WTC11 (cell line): ENCODE measurements at regions of chr19 and their contacts with region 1.

Region 1: GRCh38 chr19:28633319-28634018 is 579.5 kb downstream of the UQCRFS1 start:
- DNase-seq: peak; percentile 73
- ATAC-seq: peak; percentile 90
- H3K4me3 Mint-ChIP-seq: no peak overlapping the region
- H3K27ac Mint-ChIP-seq: peak overlapping the region; percentile 8; the same call in 1 of the 2 replicates
- H3K4me1 Mint-ChIP-seq: peaks cover 8% of the 10 kb centered on the region
- H3K27me3 Mint-ChIP-seq: no peaks in the 10 kb centered on the region
- CTCF ChIP-seq: peak; percentile 97

Region 2: DNA sequence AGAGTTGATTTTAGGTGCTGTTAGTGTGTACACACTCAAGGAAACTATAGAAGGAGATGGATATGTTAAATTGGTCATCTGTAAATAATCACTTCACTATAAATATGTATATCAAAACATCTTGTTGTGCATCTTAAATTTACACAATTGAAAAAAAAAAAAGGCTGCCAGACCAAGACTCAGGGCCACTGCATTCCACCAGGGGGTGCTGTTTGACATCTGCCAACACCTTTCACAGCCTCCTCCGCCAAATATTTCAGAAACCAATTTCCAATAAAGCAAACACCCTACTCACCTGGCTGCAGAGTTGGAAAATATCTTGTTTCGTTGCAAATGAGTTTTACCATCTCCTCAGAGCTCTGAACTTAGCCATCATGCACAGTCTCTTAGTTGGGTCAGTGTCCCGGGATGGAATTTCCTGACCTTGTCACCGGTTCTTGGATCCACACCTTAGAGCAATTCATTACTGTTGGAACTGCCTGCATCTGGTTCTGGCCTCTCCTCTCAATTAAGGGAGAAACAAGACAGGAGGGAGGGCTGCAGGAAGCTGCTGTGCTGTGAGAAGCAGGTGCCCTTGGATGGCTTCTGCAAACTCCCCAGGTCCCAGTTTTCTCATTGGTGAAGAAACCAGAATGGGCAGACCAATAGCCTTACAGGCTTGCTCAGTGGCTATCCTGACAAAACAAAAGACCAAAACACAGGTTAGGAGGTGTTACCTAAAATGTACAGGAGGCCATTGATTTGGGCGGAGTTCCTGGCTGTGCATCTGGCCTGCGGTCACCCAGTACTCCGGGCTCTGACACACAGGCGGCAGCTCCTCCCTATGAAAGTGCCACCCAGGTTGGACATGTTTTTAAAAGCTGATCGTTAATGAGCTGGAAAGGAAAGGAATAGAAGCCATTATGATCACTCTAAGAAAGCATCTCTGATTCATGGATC is 167.1 kb before region 1 on chr19:
- CTCF ChIA-PET with region 1: interaction called, 55 read pairs
- POLR2A ChIA-PET with region 1: no interaction called
- DNase-seq: peak; percentile 79
- ATAC-seq: peak; percentile 28
- H3K4me3 Mint-ChIP-seq: no peak overlapping the region
- H3K27ac Mint-ChIP-seq: no peak overlapping the region
- H3K4me1 Mint-ChIP-seq: peaks cover 32% of the 10 kb centered on the region
- H3K27me3 Mint-ChIP-seq: no peaks in the 10 kb centered on the region
- CTCF ChIP-seq: peak; percentile 83

Region 3: DNA sequence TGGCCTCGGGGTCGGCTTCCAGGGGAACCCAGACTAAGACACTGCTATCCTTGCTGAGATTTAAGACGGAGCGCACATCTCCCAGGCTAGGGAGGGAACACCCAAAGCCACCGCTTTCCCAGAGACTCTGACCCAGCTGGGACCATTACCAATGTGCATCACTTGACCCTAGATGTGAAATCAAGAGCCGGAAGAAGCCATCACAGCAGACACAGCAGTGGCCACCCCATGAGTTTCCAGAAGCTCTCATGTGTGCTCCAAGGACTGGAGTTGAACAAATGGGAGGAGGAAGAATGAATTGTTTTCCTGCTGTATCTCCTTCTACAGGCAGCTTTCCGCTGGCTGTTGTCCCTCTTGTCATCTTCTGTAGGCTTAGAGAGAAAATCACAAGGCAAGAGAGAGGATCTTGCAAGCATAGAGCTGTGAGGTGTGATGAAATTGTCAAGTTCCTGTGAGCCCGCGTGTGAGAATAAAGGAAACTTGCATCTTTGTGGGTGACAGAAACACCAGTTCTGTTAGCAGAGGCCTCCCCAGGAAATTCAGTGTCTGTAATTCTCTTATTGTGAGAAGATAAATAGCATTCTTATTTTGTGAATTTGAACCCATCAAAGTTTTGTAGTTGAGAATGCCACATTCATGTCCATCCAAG is 132.4 kb before region 1 on chr19:
- CTCF ChIA-PET with region 1: interaction called, 13 read pairs
- POLR2A ChIA-PET with region 1: no interaction called
- DNase-seq: no peak
- ATAC-seq: no peak
- H3K4me3 Mint-ChIP-seq: no peak overlapping the region
- H3K27ac Mint-ChIP-seq: no peak overlapping the region
- H3K4me1 Mint-ChIP-seq: peaks cover 44% of the 10 kb centered on the region
- H3K27me3 Mint-ChIP-seq: no peaks in the 10 kb centered on the region
- CTCF ChIP-seq: no peak

Region 4: GRCh38 chr19:28553005-28553404 is 80.5 kb before region 1 on chr19:
- CTCF ChIA-PET with region 1: no interaction called
- POLR2A ChIA-PET with region 1: no interaction called
- DNase-seq: no peak
- ATAC-seq: no peak
- H3K4me3 Mint-ChIP-seq: no peak overlapping the region
- H3K27ac Mint-ChIP-seq: no peak overlapping the region
- H3K4me1 Mint-ChIP-seq: peaks cover 11% of the 10 kb centered on the region
- H3K27me3 Mint-ChIP-seq: no peaks in the 10 kb centered on the region
- CTCF ChIP-seq: no peak

Region 5: DNA sequence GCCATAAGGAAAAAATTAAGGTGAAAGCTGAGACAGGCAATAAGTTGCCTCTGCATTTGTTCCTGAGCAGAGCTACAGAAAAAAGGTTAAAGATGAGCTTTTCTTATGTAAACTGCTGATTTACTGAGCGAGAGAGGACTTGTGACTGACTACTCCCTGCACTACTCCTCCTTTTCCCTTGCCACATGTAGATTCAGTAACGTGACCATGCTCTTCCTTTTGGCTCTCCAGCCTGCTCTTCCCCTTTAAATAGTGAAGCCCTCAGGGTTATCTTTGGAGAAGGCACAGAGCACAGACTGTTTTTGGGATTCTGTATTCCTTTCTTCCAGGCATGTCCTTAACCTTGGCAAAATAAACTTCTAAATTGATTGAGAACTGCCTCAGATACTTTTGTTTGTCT is 50.7 kb before region 1 on chr19:
- CTCF ChIA-PET with region 1: interaction called, 18 read pairs
- POLR2A ChIA-PET with region 1: no interaction called
- DNase-seq: no peak
- ATAC-seq: 0 out of 2 replicates have a peak, but pooled peaks have one; percentile 8
- H3K4me3 Mint-ChIP-seq: no peak overlapping the region
- H3K27ac Mint-ChIP-seq: peak overlapping the region; percentile 91
- H3K4me1 Mint-ChIP-seq: peaks cover 51% of the 10 kb centered on the region
- H3K27me3 Mint-ChIP-seq: no peaks in the 10 kb centered on the region
- CTCF ChIP-seq: no peak

Region 6: GRCh38 chr19:28652765-28653164 is 19.3 kb after region 1 on chr19:
- CTCF ChIA-PET with region 1: interaction called, 12 read pairs
- POLR2A ChIA-PET with region 1: no interaction called
- DNase-seq: no peak
- ATAC-seq: no peak
- H3K4me3 Mint-ChIP-seq: no peak overlapping the region
- H3K27ac Mint-ChIP-seq: peak overlapping the region; percentile 69; the same call in 1 of the 2 replicates
- H3K4me1 Mint-ChIP-seq: peaks cover 32% of the 10 kb centered on the region
- H3K27me3 Mint-ChIP-seq: no peaks in the 10 kb centered on the region
- CTCF ChIP-seq: no peak

Region 7: DNA sequence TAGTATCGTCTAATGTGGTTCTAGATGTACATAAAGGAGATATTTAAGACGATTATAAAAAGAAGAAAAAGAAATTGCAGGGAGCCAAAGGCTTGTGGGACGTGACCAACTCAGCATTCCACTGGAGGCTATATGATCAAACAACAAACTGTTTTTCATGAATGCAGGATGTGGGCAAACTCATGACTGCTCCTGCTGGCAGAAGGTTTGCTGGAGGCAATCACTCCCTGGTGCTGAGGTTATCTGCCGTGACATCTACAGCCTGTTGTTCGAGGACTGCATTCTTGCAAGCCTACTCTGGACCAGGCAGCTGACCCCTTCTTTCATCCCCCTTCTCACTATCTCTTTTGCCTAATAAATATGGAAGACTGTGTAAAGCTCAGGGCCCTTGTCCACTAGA is 61.4 kb after region 1 on chr19:
- CTCF ChIA-PET with region 1: no interaction called
- POLR2A ChIA-PET with region 1: no interaction called
- DNase-seq: no peak
- ATAC-seq: no peak
- H3K4me3 Mint-ChIP-seq: no peak overlapping the region
- H3K27ac Mint-ChIP-seq: no peak overlapping the region
- H3K4me1 Mint-ChIP-seq: no peaks in the 10 kb centered on the region
- H3K27me3 Mint-ChIP-seq: no peaks in the 10 kb centered on the region
- CTCF ChIP-seq: no peak

Region 8: GRCh38 chr19:28715157-28715556 is 81.7 kb after region 1 on chr19:
- CTCF ChIA-PET with region 1: no interaction called
- POLR2A ChIA-PET with region 1: no interaction called
- DNase-seq: no peak
- ATAC-seq: no peak
- H3K4me3 Mint-ChIP-seq: no peak overlapping the region
- H3K27ac Mint-ChIP-seq: no peak overlapping the region
- H3K4me1 Mint-ChIP-seq: no peaks in the 10 kb centered on the region
- H3K27me3 Mint-ChIP-seq: no peaks in the 10 kb centered on the region
- CTCF ChIP-seq: no peak